Activated CD4-positive, alpha-beta memory T cell treated with anti-CD3 and anti-CD28 coated beads for 36 hours (primary cell): ENCODE measurements at regions of chr11 and their contacts with region 1.

Region 1: GRCh38 chr11:11841723-11842420 is at the start of gene USP47:
- DNase-seq: peak; percentile 95
- H3K4me3 Mint-ChIP-seq: no peak within 1 kb of the TSS
- H3K27ac Mint-ChIP-seq: no peak within 1 kb of the TSS
- H3K4me1 Mint-ChIP-seq: peaks cover 25% of the 10 kb centered on the region
- H3K27me3 Mint-ChIP-seq: no peaks in the 10 kb centered on the region
- total RNA-seq, gene USP47: 58.5 to 64.0 TPM

Region 2: DNA sequence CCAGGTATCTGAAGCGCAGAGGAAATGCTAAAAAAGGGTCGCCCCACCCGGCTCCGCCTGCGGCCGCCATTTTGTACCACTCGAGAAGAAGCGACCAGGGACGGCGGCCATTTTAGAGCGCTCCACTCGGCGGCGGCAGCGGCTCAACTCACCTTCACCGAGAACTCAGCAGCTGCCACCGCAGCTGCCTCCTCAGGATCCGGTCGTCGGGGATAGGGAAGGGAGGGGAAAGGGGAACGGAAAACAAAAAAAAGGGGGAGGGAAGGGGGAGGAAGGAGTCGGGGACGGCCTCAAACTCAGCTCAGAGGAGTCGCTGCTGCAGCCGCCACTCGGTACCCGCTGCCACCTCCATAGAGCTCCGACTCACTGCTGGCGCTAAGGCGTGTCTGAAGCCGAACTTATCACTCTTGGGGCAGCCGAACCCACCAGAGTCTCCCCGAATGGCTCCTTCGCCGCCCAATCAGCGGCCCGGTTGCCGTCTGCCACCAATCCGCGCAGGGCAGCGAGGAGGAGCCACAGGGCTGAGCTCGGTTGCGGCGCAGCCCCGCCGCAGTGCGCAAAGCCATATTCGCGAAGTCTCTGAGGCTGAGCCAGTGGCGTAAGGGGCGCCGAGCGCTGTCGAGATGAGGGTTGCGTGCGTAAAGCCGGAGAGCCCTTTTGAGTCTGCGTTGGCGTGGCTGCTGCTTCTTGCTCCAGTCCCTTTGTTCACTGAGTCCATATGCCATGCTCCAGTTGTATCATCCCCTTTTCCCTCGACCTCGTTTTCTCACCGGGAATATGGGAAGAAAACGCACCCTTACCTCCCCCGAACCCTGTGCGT is 1033.1 kb before region 1 on chr11 and contains the start of gene EIF4G2:
- CTCF ChIA-PET with region 1: interaction called, 3 read pairs
- POLR2A ChIA-PET with region 1: interaction called, 25 read pairs
- intact Hi-C with region 1: loop called (anchors 1 kb)
- DNase-seq: peak; percentile 99
- H3K4me3 Mint-ChIP-seq: peak within 1 kb of the TSS; percentile 91
- H3K27ac Mint-ChIP-seq: peak within 1 kb of the TSS; percentile 98
- H3K4me1 Mint-ChIP-seq: peaks cover 46% of the 10 kb centered on the region
- H3K27me3 Mint-ChIP-seq: no peaks in the 10 kb centered on the region
- total RNA-seq, gene EIF4G2: 794 to 835 TPM

Region 3: GRCh38 chr11:11621573-11622319 is 220.1 kb before region 1 on chr11 and contains the start of gene GALNT18:
- CTCF ChIA-PET with region 1: no interaction called
- POLR2A ChIA-PET with region 1: no interaction called
- intact Hi-C with region 1: loop called (anchors 5 kb)
- DNase-seq: peak; percentile 88
- H3K4me3 Mint-ChIP-seq: peak within 1 kb of the TSS; percentile 67
- H3K27ac Mint-ChIP-seq: no peak within 1 kb of the TSS
- H3K4me1 Mint-ChIP-seq: peaks cover 3% of the 10 kb centered on the region
- H3K27me3 Mint-ChIP-seq: peaks cover 54% of the 10 kb centered on the region
- total RNA-seq, gene GALNT18: 2.4 to 2.7 TPM

Region 4: DNA sequence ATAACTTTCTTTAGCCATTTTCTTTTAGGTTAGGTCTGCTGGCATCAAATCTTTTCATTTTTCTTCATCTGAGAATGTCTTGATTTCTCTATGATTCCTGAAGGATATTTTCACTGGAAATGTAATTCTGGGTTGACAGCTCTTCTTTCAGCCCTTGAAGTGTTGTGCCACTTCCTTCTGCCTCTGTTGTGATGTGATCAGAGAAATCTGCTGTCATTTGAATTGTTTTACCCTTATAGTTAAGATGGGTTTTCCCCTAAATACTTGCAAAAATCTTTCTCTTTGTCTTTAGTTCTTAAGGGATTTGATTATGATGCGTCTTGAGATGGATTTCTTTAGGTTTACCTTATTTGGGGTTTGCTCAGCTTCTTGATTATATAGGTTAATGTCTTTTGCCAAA is 22.9 kb after region 1 on chr11:
- CTCF ChIA-PET with region 1: interaction called, 5 read pairs
- POLR2A ChIA-PET with region 1: interaction called, 3 read pairs
- intact Hi-C with region 1: loop called (anchors 2 kb)
- DNase-seq: no peak
- H3K4me3 Mint-ChIP-seq: no peak overlapping the region
- H3K27ac Mint-ChIP-seq: no peak overlapping the region
- H3K4me1 Mint-ChIP-seq: peaks cover 52% of the 10 kb centered on the region
- H3K27me3 Mint-ChIP-seq: no peaks in the 10 kb centered on the region

Region 5: GRCh38 chr11:12159351-12160099 is 317.7 kb after region 1 on chr11:
- CTCF ChIA-PET with region 1: no interaction called
- POLR2A ChIA-PET with region 1: no interaction called
- intact Hi-C with region 1: loop called (anchors 10 kb)
- DNase-seq: peak; percentile 11
- H3K4me3 Mint-ChIP-seq: no peak overlapping the region
- H3K27ac Mint-ChIP-seq: peak overlapping the region; percentile 36
- H3K4me1 Mint-ChIP-seq: peaks cover 58% of the 10 kb centered on the region
- H3K27me3 Mint-ChIP-seq: no peaks in the 10 kb centered on the region

Region 6: GRCh38 chr11:12673924-12674570 is 832.2 kb after region 1 on chr11 and contains the start of gene TEAD1:
- CTCF ChIA-PET with region 1: no interaction called
- POLR2A ChIA-PET with region 1: no interaction called
- intact Hi-C with region 1: loop called (anchors 10 kb)
- DNase-seq: peak; percentile 91
- H3K4me3 Mint-ChIP-seq: peak within 1 kb of the TSS; percentile 76
- H3K27ac Mint-ChIP-seq: no peak within 1 kb of the TSS
- H3K4me1 Mint-ChIP-seq: peaks cover 8% of the 10 kb centered on the region
- H3K27me3 Mint-ChIP-seq: peaks cover 61% of the 10 kb centered on the region
- total RNA-seq, gene TEAD1: 1.0 to 1.5 TPM